ENCODE measurements at regions of chr17 and their contacts with region 1.

Region 1: GRCh38 chr17:4304417-4305027 is 40.7 kb upstream of the ANKFY1 start:
- DNase-seq: peak; percentile 12
- H3K4me3 Mint-ChIP-seq: no peak overlapping the region
- H3K27ac Mint-ChIP-seq: no peak overlapping the region
- H3K4me1 Mint-ChIP-seq: peaks cover 26% of the 10 kb centered on the region
- H3K27me3 Mint-ChIP-seq: no peaks in the 10 kb centered on the region

Region 2: GRCh38 chr17:4215882-4216570 is 88.5 kb before region 1 on chr17:
- intact Hi-C with region 1: loop called (anchors 1 kb)
- DNase-seq: no peak
- H3K4me3 Mint-ChIP-seq: no peak overlapping the region
- H3K27ac Mint-ChIP-seq: peak overlapping the region; percentile 15
- H3K4me1 Mint-ChIP-seq: peaks cover 21% of the 10 kb centered on the region
- H3K27me3 Mint-ChIP-seq: no peaks in the 10 kb centered on the region

Region 3: DNA sequence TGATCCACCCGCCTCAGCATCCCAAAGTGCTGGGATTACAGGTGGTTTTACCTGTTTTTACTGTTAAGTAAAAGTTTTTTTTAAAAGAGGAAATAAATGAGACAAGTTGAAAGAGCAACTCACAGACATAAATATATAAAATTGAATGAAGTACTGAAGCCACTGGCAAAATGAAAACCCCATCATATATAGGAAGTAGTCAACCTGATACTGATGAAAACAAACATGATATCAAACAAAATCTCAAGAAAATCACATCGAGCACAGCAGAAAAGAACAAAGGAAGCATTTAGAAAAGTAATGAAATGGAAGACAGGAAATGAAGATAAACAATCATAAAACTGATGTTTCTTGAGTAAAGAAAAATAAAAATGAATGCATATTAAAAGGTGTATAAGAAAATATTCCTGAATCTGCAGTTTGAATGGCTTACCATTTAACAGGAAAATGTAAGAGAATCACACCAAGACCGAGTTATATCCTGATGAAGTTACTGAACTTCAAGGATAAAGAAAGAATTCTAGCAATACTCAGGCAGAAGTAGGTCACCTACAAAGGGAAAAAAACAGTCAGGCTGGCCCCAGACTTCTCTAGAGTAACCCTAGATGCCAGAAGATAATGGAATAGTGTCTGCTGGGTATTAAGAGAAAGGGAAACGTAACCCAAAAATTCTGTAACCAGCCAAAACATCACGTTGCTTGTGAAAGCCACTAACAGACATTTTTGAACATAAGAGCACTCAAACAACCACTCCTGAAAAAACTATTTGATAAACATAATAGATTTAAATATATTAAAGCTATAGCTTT is 30.5 kb after region 1 on chr17:
- intact Hi-C with region 1: loop called (anchors 1 kb)
- DNase-seq: no peak
- H3K4me3 Mint-ChIP-seq: peak overlapping the region; percentile 10
- H3K27ac Mint-ChIP-seq: peak overlapping the region; percentile 50
- H3K4me1 Mint-ChIP-seq: peaks cover 37% of the 10 kb centered on the region
- H3K27me3 Mint-ChIP-seq: no peaks in the 10 kb centered on the region

Region 4: DNA sequence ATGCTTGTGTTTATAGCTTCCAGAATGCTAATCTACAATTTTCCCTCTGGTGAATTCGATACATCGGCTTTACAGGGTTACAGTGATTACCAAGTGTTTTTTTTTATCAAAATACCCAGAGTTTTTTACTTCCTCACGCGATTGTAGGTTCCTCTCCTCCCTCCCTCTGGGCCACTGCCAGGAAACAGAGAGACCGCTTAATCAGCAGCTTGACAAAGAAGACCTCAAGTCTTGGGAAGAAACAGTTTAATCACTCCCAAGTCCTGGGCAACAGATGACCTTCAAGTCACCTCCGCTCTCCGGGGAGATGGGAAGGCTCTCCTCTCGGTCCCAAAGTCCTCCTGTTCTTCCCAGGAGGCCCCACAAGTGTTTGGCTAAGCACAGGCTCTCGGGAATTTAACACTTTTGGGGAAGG is 303.3 kb after region 1 on chr17:
- intact Hi-C with region 1: no loop called
- DNase-seq: no peak
- H3K4me3 Mint-ChIP-seq: no peak overlapping the region
- H3K27ac Mint-ChIP-seq: no peak overlapping the region
- H3K4me1 Mint-ChIP-seq: no peaks in the 10 kb centered on the region
- H3K27me3 Mint-ChIP-seq: peaks cover 26% of the 10 kb centered on the region

Measured in activated T-helper 1 cell treated with anti-CD3 and anti-CD28 coated beads, Interleukin-12 subunit alpha, Interleukin-12 subunit beta, Interleukin-2, Interleukin-4 antibody, amounts not matched to agents 30 ng/mL and 10 ng/mL and 1 ng/mL, durations not matched to agents 14 hours and 24 hours and 36 hours (primary cell).